AG04449 (cell line): ENCODE measurements at regions of chr12 and their contacts with region 1.

Region 1: DNA sequence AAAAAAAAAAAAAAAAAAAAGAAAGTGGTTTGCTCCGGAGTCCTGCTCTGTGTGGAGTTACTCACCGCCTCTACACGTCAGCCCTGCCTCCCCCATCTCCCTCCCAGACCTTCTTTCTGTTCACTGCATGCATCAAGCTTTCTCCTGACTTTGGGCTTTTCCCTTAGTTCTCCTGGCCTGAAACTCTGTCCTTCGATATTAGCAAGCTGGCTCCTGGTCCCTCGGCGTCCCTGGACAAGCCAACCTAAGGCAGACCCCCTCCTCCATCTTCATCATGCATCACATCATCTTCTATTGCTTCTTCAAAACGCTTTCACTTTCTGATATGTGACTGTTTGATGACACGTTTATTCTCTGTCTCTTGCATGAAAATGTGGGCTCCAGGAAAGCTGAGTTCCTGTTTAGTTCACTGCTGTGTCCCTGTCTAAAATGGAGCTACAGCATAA is 40.6 kb downstream of the SLC15A4 start:
- DNase-seq: no peak
- H3K4me3 ChIP-seq: no peak overlapping the region
- CTCF ChIP-seq: no peak

Region 2: GRCh38 chr12:128772249-128772648 is 10.9 kb before region 1 on chr12:
- CTCF ChIA-PET with region 1: interaction called, 11 read pairs
- POLR2A ChIA-PET with region 1: no interaction called
- DNase-seq: no peak
- H3K4me3 ChIP-seq: no peak overlapping the region
- CTCF ChIP-seq: no peak

Region 3: DNA sequence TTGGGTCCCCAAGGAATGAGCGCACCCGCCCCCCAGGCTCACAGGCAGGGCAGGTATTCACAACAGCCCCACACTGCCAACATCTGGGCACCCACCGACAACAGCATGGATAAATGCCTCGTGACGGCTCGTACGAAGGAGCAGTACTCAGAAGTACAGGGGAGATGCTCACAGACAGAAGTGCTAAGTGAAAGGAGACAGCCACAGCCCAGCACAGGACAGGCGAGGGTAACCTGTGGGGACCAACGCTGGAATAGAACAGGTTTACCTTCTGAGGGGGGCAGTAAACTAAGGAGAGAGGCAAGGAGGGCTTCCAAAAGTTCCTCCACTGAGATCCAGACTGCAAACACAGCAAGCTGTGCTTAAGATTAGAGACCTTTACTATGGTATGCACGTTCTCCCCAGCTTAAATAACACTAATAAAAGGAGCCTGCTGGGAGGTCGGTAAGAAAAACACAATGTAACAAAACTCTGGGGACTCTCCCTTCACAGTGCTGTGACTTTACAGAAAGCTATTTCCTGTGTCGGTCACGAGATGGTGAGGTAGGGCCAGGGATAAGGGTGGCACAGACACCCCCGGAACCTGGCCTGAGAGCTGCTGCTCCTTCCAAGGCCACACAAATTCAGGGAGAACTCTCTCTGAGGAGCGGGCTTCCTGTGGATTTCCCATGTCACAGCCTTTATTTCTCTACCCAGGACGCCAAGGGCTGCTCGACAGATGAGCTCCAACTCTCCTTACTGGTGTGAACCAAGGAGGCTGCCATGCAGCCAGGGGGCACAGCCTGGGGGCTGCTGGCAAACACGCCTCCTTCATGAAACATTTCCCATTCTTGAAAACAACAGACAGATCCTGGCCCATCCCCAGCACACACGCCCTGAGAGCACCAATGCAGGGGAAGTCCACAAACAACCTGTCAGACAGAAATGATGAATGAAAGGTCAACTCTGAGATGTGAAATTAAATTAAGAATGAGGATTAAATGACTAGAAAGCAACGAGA is 14.3 kb after region 1 on chr12:
- CTCF ChIA-PET with region 1: interaction called, 21 read pairs
- POLR2A ChIA-PET with region 1: no interaction called
- DNase-seq: peak; percentile 17
- H3K4me3 ChIP-seq: no peak overlapping the region
- CTCF ChIP-seq: no peak

Region 4: GRCh38 chr12:128825835-128826234 is 42.7 kb after region 1 on chr12:
- CTCF ChIA-PET with region 1: no interaction called
- POLR2A ChIA-PET with region 1: no interaction called
- DNase-seq: no peak
- H3K4me3 ChIP-seq: no peak overlapping the region
- CTCF ChIP-seq: no peak

Region 5: GRCh38 chr12:128853575-128854197 is 70.5 kb after region 1 on chr12:
- CTCF ChIA-PET with region 1: no interaction called
- POLR2A ChIA-PET with region 1: no interaction called
- DNase-seq: no peak
- H3K4me3 ChIP-seq: no peak overlapping the region
- CTCF ChIP-seq: no peak